HCT116 (cell line): ENCODE measurements at regions of chr9 and their contacts with region 1.

Region 1: DNA sequence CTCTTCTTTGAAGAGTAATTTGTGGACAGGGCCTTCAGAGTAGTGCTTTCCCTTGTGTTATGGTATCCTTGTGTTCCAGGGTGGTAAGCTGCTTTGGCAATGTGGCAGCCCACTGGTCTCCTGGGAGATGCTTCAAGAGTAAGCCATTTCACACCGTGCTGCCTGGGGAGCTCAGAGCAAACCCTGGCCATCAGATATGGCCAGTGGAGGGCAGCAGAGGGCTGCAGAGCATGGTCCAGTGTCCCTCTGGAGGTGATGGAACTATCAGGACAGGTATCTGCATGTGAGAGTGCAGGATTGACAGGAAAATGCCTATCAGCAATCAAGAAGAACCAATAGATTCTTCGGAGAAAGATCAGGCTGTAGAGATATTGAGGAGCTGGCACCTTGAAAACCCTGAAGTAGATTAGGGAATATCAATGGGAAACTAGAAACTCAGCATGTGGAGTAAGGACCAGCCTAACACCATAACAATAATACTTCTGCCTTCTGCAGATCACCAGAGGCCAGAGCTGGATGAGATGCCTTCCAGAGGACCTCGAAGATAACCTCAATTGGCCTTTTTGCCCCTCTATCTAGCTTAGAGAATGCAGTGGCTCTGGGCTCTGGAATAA is 90.8 kb downstream of the PLPPR1 start:
- DNase-seq: peak; percentile 28
- ATAC-seq: peak; percentile 100
- H3K4me3 ChIP-seq: no peak overlapping the region
- H3K27ac ChIP-seq: no peak overlapping the region
- H3K4me1 ChIP-seq: no peaks in the 10 kb centered on the region
- H3K27me3 ChIP-seq: peaks cover 6% of the 10 kb centered on the region; the same call in 1 of the 2 replicates
- CTCF ChIP-seq: peak; percentile 52 to 89 (median 84); a peak in 5 of 6 replicates
- POLR2A ChIP-seq: no peak
- RAD21 ChIP-seq: peak; percentile 68

Region 2: GRCh38 chr9:100714372-100715099 is 404.8 kb before region 1 on chr9:
- CTCF ChIA-PET with region 1: no interaction called
- POLR2A ChIA-PET with region 1: no interaction called
- RAD21 ChIA-PET with region 1: no interaction called
- intact Hi-C with region 1: loop called (anchors 1 kb)
- DNase-seq: peak; percentile 41
- ATAC-seq: peak; percentile 99
- H3K4me3 ChIP-seq: no peak overlapping the region
- H3K27ac ChIP-seq: no peak overlapping the region
- H3K4me1 ChIP-seq: no peaks in the 10 kb centered on the region
- H3K27me3 ChIP-seq: peaks cover 10% of the 10 kb centered on the region; the same call in 1 of the 2 replicates
- CTCF ChIP-seq: peak; percentile 52 to 95 (median 94)
- POLR2A ChIP-seq: no peak
- RAD21 ChIP-seq: peak; percentile 82